ENCODE measurements at regions of chr6 and their contacts with region 1.

Region 1: GRCh38 chr6:52995913-52996645 is 995 bp upstream of the GSTA4 start:
- DNase-seq: peak in 1 of 2 donors; percentile 86
- H3K4me3 ChIP-seq: peak overlapping the region; percentile 26 to 95
- H3K27ac ChIP-seq: peak overlapping the region; percentile 94 to 96
- H3K4me1 ChIP-seq: peaks cover 0 to 24% of the 10 kb centered on the region in 2 donors
- H3K27me3 ChIP-seq: no peaks in the 10 kb centered on the region
- CTCF ChIP-seq: no peak

Region 2: DNA sequence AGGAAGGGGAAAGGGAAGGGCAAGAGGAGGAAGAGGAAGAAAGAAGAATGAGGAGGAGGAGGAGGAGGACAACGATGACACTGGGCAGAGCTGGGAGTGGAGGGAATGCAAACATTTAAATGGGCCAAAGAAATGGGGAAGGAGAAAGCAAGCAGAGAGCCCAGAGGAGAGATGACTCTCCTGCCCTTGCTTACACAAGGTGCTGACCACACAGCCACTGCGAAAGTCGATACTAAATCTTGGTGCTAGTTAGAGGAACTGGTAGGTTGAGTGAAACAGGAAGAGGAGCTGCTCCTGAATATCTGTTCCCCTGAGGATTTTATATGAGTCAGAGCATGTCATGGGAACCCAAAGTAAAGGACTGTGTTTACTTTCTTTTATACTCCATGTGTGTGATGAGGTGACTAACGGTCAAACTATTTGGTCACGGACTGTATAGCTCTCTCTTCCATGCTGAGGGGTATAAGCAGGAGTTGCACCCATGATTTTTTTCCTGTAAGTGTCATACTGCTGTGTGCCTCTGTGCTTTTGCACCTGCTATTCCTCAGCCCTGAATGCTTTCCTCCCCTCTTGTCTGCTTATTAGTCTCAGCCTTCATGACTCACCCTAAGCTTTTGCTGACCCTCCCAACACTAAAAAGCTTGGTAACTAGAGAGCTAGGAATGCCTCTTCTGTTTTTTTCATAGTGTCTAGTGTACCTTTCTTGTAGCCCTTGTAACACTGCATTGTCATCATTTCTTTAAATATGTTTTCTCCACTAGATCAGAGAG is 643.7 kb before region 1 on chr6:
- intact Hi-C with region 1: loop called (anchors 10 kb)
- DNase-seq: no peak
- H3K4me3 ChIP-seq: no peak overlapping the region
- H3K27ac ChIP-seq: peak overlapping the region in 1 of 2 donors; percentile 13
- H3K4me1 ChIP-seq: peaks cover 0 to 3% of the 10 kb centered on the region in 2 donors
- H3K27me3 ChIP-seq: no peaks in the 10 kb centered on the region
- CTCF ChIP-seq: no peak

Region 3: DNA sequence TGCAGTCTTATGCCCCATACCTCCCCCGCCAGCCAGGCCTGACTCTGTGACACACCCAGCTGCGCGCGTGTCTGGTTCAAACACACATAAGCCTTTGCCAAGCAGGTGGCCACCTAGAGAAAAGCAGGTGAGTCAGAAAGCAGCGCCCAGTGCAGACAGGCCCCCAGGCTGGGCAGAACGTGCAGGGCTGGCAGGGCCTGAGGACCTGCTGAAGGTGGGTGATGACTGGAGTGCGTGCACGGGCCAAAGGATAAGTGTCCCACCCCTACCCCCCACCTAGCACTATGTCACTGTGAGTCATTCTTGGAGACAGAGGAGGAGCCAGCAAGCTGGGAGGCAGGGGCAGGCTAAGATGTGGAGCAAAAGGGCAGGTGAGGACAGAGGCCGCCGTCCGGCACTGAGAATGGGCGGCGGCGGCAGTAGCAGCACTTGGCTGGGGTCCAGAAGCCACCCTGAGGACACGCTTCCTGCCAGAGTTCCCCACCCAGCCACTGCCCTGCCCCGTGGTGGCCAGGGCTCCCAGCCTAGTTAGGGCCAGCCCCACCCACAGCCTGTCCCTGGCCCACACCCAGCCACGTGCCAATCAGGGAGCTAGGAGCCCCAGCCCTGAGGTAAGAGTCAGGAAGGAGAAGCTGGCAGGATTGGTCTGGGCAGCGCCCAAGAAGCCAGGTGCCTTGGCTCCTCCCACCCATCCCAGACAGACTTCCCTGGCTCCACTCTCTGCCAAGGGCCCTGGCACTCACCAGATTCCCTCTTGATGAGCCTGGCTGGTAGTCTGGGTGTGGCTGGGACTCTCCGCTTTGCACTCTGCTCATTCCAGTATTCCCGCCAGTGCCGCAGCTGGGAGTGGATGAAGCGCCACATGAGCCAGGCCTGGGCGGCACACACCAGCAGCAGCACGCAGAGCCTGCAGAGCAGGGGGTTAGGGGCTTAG is 492.0 kb before region 1 on chr6:
- intact Hi-C with region 1: loop called (anchors 10 kb)
- DNase-seq: peak; percentile 87 to 93
- H3K4me3 ChIP-seq: no peak overlapping the region
- H3K27ac ChIP-seq: peak overlapping the region; percentile 72 to 82
- H3K4me1 ChIP-seq: peaks cover 24 to 35% of the 10 kb centered on the region in 2 donors
- H3K27me3 ChIP-seq: no peaks in the 10 kb centered on the region
- CTCF ChIP-seq: no peak

Region 4: DNA sequence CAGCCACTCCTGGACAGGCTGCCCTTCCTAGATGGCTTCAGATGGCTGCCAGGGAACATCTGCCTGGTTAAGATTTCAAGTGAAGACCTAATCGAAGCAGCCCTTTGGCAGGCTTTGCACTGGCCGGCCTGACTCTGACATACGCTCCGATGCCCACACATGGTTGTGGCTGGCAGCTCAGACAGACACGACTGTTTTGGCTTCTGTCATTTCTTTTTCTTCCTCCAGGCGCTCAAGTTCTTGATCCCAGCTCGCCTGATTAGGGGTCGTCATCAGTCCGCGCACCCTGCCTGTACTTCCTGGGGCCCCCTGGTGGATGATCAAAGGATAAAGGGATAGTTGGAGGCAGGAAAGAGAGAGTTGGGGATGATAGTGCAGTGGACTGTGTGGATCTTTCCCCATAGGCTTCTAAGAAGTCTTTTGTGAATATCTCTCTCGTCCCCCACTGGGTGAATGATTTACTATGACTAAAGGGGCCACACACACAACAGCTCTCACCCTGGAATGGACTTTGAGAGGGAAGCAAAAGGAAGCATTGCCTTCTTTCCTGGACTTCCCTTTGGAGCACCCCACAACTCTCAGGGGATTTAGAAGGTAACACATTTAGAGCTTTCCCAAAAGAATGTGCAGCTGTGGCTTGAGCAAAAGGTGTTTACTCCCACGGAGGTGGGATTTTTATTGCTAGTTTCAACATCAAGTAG is 397.8 kb before region 1 on chr6:
- intact Hi-C with region 1: loop called (anchors 5 kb)
- DNase-seq: peak in 1 of 2 donors; percentile 85
- H3K4me3 ChIP-seq: peak overlapping the region in 1 of 2 donors; percentile 46
- H3K27ac ChIP-seq: peak overlapping the region; percentile 64 to 78
- H3K4me1 ChIP-seq: peaks cover 16 to 33% of the 10 kb centered on the region in 2 donors
- H3K27me3 ChIP-seq: no peaks in the 10 kb centered on the region
- CTCF ChIP-seq: peak; percentile 64 to 79 (median 69)

Region 5: DNA sequence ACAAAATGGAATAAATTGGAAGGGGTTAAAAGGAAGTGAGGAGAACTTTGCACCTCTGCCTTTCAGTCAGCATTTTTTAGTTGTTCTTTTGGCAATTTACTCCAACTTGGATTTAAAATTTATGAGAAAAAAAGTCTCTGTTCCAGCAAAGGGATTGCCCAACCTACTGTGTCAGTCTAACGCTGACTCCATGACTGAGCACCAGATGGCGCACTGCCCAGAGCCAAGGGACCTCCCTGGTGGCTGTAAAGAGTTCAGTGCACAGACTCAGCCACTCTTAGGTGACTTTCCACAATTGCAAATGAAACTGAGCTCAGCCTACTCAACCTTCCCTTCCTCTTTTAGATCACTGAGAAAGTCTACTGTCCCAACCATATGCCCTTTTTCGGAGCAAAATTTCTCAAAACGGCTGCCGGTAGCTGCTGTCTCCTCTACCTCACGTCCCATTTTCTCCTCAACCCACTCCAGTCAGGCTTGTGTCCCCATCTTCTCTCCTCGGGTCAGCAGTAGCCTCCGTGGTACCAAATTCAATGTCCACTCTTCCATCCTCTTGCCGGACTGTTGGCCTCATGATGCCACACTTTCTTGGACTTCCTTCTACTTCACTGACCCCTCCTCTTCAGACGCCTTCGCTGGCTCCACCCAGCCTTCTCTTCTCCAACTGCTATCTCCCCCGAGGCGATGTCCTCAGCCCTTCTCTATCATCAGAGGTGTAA is 271.5 kb before region 1 on chr6:
- intact Hi-C with region 1: loop called (anchors 2 kb)
- DNase-seq: peak; percentile 61 to 89
- H3K4me3 ChIP-seq: no peak overlapping the region
- H3K27ac ChIP-seq: peak overlapping the region; percentile 71 to 91
- H3K4me1 ChIP-seq: peaks cover 2 to 9% of the 10 kb centered on the region in 2 donors
- H3K27me3 ChIP-seq: no peaks in the 10 kb centered on the region
- CTCF ChIP-seq: peak in 2 of 3 experiments; percentile 43 to 48

Region 6: GRCh38 chr6:53348371-53349208 is 352.5 kb after region 1 on chr6 and contains the start of gene ELOVL5:
- intact Hi-C with region 1: loop called (anchors 2 kb)
- DNase-seq: peak; percentile 99 to 100
- H3K4me3 ChIP-seq: peak within 1 kb of the TSS; percentile 93 to 98
- H3K27ac ChIP-seq: peak within 1 kb of the TSS; percentile 99
- H3K4me1 ChIP-seq: peaks cover 0 to 5% of the 10 kb centered on the region in 2 donors
- H3K27me3 ChIP-seq: no peaks in the 10 kb centered on the region
- CTCF ChIP-seq: no peak
- total RNA-seq, gene ELOVL5: 53.7 TPM

Region 7: DNA sequence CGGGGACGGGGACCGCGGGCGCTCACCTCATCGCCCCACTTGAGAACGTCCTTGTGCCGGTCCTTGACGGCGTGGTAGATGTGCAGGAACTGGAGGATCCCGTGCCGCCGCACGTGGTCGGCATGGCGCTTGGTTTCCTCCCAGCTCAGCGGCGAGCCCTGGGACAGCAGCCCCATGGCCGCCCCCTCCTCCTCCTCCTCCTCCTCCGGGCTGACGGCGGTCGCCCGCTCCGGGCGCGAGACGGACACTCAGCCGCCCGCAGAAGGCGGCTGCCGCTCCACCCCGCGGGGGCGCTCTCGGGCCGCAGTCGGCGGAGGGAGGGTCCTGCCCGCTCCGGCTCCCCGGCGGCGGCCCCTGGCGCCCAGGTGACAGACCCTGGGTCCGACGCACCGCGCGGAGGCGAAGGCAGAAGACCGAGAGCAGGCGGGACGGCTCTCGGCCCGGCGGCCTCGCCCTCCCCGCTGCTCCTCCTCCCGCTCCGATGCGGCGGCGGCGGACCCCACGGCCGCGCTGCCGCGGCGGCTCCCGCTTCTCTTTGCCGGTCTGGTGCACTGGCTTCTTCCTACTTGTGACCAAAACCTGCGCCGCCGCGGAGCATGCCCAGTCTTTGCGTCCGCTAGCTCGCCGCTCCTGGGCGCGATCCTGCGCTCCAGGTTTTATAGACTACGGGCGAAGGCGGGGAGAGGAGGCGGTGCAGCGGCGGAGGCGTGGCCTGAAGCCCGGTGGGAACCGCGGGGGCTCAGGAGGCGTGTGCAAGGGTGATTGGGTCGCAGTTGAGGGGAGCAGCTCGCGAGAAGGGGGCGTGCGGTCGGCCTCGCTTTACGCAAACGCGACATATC is 548.6 kb after region 1 on chr6 and contains the start of gene GCLC:
- intact Hi-C with region 1: loop called (anchors 2 kb)
- DNase-seq: peak; percentile 79 to 97
- H3K4me3 ChIP-seq: peak within 1 kb of the TSS; percentile 81 to 96
- H3K27ac ChIP-seq: peak within 1 kb of the TSS; percentile 89 to 93
- H3K4me1 ChIP-seq: peaks cover 0 to 14% of the 10 kb centered on the region in 2 donors
- H3K27me3 ChIP-seq: no peaks in the 10 kb centered on the region
- CTCF ChIP-seq: peak in 2 of 3 experiments; percentile 60 to 72
- total RNA-seq, gene GCLC: 54.9 TPM

Measured in ascending aorta (tissue), 2 donors.